Panc1 (cell line): ENCODE measurements at regions of chr6 and their contacts with region 1.

Region 1: DNA sequence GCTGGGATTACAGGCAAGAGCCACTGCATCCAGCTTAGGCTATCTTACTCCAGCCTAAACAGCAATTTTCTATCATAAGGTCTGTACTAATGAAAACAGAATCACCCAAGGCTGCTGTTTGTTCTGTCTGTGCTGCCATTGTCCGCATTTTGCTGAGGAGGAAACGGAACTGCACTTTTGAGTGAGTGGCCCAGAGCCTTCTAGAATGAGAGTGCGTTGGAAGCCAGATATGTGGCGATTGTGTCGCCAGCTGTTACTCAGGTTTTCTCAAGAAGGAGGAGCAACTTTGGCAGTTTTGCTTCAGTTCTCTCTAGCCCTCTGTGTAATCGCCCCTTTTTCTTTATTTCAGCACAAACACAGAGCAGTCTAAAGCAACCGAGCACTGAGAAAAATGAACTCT is 18.3 kb downstream of the PRDM1 start:
- DNase-seq: no peak
- ATAC-seq: no peak
- H3K4me3 ChIP-seq: no peak overlapping the region
- H3K27ac ChIP-seq: no peak overlapping the region
- H3K4me1 ChIP-seq: peaks cover 9% of the 10 kb centered on the region; the same call in 1 of the 2 replicates
- H3K27me3 ChIP-seq: no peaks in the 10 kb centered on the region
- CTCF ChIP-seq: no peak

Region 2: DNA sequence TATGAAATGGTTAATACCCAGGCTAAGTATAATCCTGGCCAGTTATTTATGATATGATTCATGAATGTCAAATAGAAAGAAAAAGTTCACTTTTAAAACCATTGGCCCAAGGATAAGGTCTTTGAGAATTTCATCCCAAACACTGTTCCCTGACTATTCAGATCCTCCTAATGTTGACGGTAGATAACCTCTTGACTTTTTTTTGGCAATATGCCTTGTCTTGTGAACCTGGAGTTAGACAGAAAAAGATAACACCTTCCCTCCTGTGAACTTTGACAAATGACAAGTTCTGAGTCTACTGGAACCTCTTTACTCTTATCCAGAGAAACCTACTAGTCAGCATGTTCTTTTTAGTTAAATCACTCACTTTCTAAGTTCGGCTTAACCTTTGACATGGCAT is 534.8 kb before region 1 on chr6:
- CTCF ChIA-PET with region 1: no interaction called
- POLR2A ChIA-PET with region 1: interaction called, 15 read pairs
- in situ Hi-C with region 1: no loop called
- intact Hi-C with region 1: no loop called
- DNase-seq: no peak
- ATAC-seq: no peak
- H3K4me3 ChIP-seq: no peak overlapping the region
- H3K27ac ChIP-seq: no peak overlapping the region; the same call in 1 of the 2 replicates
- H3K4me1 ChIP-seq: no peaks in the 10 kb centered on the region
- H3K27me3 ChIP-seq: no peaks in the 10 kb centered on the region
- CTCF ChIP-seq: no peak

Region 3: DNA sequence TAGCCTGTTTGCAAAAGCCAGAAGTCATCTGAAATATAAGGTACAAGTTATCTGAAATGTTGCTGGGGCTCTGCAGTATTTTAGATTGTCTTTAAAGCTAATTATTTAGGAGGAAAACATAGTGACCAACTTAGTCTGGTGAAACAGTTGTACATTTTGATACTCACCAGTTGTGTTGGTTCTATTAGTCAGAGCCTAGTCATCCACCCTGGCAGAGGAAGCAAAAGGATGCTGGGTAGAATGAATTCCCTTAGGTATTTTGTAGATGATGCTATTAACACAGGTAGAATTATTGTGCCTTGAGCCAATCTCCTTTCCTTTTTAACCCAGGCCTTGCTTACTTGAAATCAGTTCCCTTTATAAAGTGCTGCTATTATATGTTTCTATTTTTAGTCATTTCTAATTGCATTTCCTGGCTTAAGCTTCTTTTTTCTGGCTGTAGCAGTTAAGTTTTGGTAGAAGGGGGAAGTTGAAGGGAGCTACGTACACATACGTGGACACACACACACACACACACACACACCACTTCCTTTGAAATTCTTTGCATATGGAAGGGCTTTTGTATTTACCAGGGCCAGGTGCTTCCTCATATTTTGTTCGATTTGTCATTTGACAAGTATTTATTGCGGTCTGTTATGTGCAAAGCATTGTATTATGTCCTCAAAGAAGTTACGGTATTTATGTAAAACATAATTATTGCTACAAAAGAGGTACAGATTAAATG is 442.4 kb after region 1 on chr6:
- CTCF ChIA-PET with region 1: no interaction called
- POLR2A ChIA-PET with region 1: no interaction called
- in situ Hi-C with region 1: no loop called
- intact Hi-C with region 1: no loop called
- DNase-seq: peak; percentile 90
- ATAC-seq: peak; percentile 93
- H3K4me3 ChIP-seq: no peak overlapping the region
- H3K27ac ChIP-seq: peak overlapping the region; percentile 18
- H3K4me1 ChIP-seq: peaks cover 7% of the 10 kb centered on the region
- H3K27me3 ChIP-seq: no peaks in the 10 kb centered on the region
- CTCF ChIP-seq: no peak